Sigmoid colon (tissue), 7 donors: ENCODE measurements at regions of chr6 and their contacts with region 1.

Region 1: DNA sequence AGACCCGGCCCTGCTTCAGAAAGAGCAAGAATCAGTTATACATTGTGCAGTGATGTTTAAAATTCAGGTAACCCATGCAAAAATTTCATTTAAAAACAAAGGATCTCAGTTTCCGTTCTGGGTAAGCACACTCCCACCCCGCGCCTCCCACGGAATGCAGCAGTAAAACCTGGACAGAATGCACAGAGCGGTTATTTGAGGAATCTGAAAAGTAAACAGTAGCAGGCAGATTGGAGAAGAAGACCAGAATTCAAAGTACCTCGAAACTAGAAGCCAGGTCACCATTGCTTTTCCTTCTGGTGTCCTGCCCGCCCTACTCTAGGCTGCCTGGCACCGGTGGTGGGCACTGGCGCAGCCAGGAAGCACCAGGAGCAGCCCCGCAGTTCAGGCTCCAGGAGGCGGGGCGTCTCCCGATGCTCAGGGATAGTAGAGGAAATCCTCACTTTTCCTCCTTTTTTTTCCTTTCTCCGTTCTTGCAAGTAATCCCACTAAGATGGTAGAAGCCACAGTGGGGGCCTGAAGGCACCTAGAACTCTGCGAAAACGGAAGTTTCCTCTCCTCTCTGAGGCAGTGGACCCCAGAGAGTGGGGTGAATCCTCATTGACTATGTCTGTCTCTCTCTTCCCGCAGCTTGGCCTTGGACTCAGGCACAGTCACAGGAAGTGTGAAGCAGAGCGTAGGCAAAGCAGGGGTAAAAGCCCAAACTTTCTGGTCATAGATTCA is 28.3 kb downstream of the METTL24 start:
- DNase-seq: peak; percentile 75
- H3K4me3 ChIP-seq: peak overlapping the region in 3 of 4 donors; percentile 19 to 40 (median 39)
- H3K27ac ChIP-seq: peak overlapping the region; percentile 87 to 90 (median 89)
- H3K4me1 ChIP-seq: peaks cover 0 to 99% (median 95%) of the 10 kb centered on the region in 4 donors
- H3K27me3 ChIP-seq: no peaks in the 10 kb centered on the region
- CTCF ChIP-seq: no peak
- EP300 ChIP-seq: no peak
- POLR2A ChIP-seq: no peak

Region 2: DNA sequence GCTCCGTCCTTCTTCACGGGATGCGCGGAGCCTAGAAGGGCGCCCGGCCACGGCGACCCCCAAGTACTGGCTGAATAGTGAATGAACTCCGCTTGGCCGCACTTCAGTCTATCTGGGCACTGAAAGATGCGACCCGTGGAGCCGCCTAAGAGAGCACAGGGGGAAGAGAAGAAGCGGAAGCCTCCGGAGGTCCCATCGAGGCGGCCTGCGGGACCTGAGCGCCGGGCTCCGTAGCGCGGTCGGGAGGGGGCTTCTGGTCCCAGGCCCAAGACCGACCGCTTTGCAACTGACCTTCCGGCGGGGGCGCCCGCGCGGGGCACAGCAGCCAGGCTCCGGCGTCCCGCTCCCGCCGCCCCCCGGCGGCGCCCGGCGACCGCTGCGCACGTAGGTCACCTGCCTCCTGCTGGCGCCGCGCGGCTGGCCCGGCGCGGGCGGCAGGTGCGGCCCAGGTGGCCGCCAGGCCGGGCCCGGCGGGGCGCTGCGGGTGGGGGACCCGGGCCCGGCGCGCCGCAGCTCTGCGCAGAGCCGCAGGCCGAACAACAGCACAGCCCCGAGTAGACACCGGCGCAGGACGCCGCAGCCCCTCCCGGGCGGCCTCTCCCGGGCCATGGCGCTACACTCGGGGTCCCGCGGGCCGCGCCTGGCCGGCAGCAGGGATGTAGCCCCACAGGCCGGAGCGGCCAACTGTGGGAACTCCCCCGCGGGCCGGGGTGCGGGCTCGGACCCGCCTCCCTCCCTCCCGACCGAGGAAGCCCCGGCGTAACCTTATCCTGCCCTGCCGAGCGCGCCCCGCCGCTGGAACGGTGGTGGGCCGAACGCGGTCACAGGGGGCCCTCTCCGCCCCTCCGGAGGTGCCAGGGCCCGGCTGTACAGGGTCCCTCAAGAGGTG is 28.0 kb after region 1 on chr6 and contains the start of gene METTL24:
- intact Hi-C with region 1: loop called (anchors 2 kb)
- DNase-seq: no peak
- H3K4me3 ChIP-seq: peak within 1 kb of the TSS; percentile 56 to 74 (median 68)
- H3K27ac ChIP-seq: peak within 1 kb of the TSS; percentile 93 to 98 (median 95)
- H3K4me1 ChIP-seq: peaks cover 0 to 54% (median 52%) of the 10 kb centered on the region in 4 donors
- H3K27me3 ChIP-seq: no peaks in the 10 kb centered on the region
- CTCF ChIP-seq: no peak
- EP300 ChIP-seq: no peak
- POLR2A ChIP-seq: no peak
- total RNA-seq, gene METTL24: 24.4 to 41.3 (median 39.9) TPM